Heart right ventricle (tissue), 16 donors: ENCODE measurements at regions of chr1 and their contacts with region 1.

Region 1: GRCh38 chr1:154220071-154220969 is at the start of gene UBAP2L:
- DNase-seq: peak; percentile 99
- ATAC-seq: peak; percentile 97 to 99 (median 98)
- H3K4me3 ChIP-seq: peak within 1 kb of the TSS; percentile 69 to 93 (median 88)
- H3K27ac ChIP-seq: peak within 1 kb of the TSS; percentile 90 to 100 (median 99)
- H3K4me1 ChIP-seq: peaks cover 14 to 67% (median 62%) of the 10 kb centered on the region in 9 donors
- H3K27me3 ChIP-seq: no peaks in the 10 kb centered on the region
- CTCF ChIP-seq: no peak
- total RNA-seq, gene UBAP2L: 103 to 135 (median 112) TPM

Region 2: GRCh38 chr1:154157520-154158306 is 62.6 kb before region 1 on chr1:
- intact Hi-C with region 1: no loop called
- DNase-seq: peak in 1 of 2 donors; percentile 7
- ATAC-seq: peak in 2 of 8 donors; percentile 48 to 59
- H3K4me3 ChIP-seq: no peak overlapping the region
- H3K27ac ChIP-seq: peak overlapping the region in 4 of 10 donors; percentile 17 to 81 (median 56)
- H3K4me1 ChIP-seq: peaks cover 0 to 72% (median 22%) of the 10 kb centered on the region in 9 donors
- H3K27me3 ChIP-seq: no peaks in the 10 kb centered on the region
- CTCF ChIP-seq: no peak

Region 3: GRCh38 chr1:154183045-154183915 is 37.0 kb before region 1 on chr1:
- intact Hi-C with region 1: loop called in 3 of 10 experiments (anchors 2 to 5 kb)
- DNase-seq: peak; percentile 95 to 96
- ATAC-seq: peak; percentile 96 to 98 (median 98)
- H3K4me3 ChIP-seq: peak overlapping the region; percentile 66 to 95 (median 80)
- H3K27ac ChIP-seq: peak overlapping the region; percentile 26 to 95 (median 89)
- H3K4me1 ChIP-seq: peaks cover 10 to 47% (median 44%) of the 10 kb centered on the region in 9 donors
- H3K27me3 ChIP-seq: no peaks in the 10 kb centered on the region
- CTCF ChIP-seq: peak in 4 of 9 donors; percentile 22 to 40 (median 34)

Region 4: GRCh38 chr1:154256686-154257085 is 36.4 kb after region 1 on chr1:
- intact Hi-C with region 1: loop called in 1 of 10 experiments (anchors 5 kb)
- DNase-seq: no peak
- ATAC-seq: no peak
- H3K4me3 ChIP-seq: no peak overlapping the region
- H3K27ac ChIP-seq: no peak overlapping the region
- H3K4me1 ChIP-seq: no peaks in the 10 kb centered on the region
- H3K27me3 ChIP-seq: no peaks in the 10 kb centered on the region
- CTCF ChIP-seq: no peak

Region 5: GRCh38 chr1:154263465-154264332 is 43.4 kb after region 1 on chr1:
- intact Hi-C with region 1: loop called in 2 of 10 experiments (anchors 5 kb)
- DNase-seq: no peak
- ATAC-seq: peak in 1 of 8 donors; percentile 17
- H3K4me3 ChIP-seq: no peak overlapping the region
- H3K27ac ChIP-seq: peak overlapping the region in 2 of 10 donors; percentile 7 to 19
- H3K4me1 ChIP-seq: peaks cover 0 to 14% (median 4%) of the 10 kb centered on the region in 9 donors
- H3K27me3 ChIP-seq: no peaks in the 10 kb centered on the region
- CTCF ChIP-seq: no peak

Region 6: GRCh38 chr1:154272217-154272998 is 52.1 kb after region 1 on chr1 and contains the start of gene HAX1:
- intact Hi-C with region 1: loop called in 4 of 10 experiments (anchors 2 to 5 kb)
- DNase-seq: peak; percentile 90 to 95
- ATAC-seq: peak; percentile 91 to 96 (median 93)
- H3K4me3 ChIP-seq: peak within 1 kb of the TSS; percentile 59 to 96 (median 80)
- H3K27ac ChIP-seq: peak within 1 kb of the TSS; percentile 57 to 97 (median 90)
- H3K4me1 ChIP-seq: peaks cover 3 to 21% (median 12%) of the 10 kb centered on the region in 9 donors
- H3K27me3 ChIP-seq: no peaks in the 10 kb centered on the region
- CTCF ChIP-seq: peak; percentile 62 to 93 (median 79)
- total RNA-seq, gene HAX1: 162 to 196 (median 171) TPM

Region 7: GRCh38 chr1:154335025-154335714 is 114.8 kb after region 1 on chr1:
- intact Hi-C with region 1: loop called in 1 of 10 experiments (anchors 10 kb)
- DNase-seq: peak; percentile 81 to 83
- ATAC-seq: peak in 7 of 8 donors; percentile 66 to 84 (median 77)
- H3K4me3 ChIP-seq: no peak overlapping the region
- H3K27ac ChIP-seq: peak overlapping the region in 6 of 10 donors; percentile 3 to 79 (median 19)
- H3K4me1 ChIP-seq: peaks cover 0 to 53% (median 9%) of the 10 kb centered on the region in 9 donors
- H3K27me3 ChIP-seq: no peaks in the 10 kb centered on the region
- CTCF ChIP-seq: peak; percentile 74 to 93 (median 89)